AG04450 (cell line): ENCODE measurements at regions of chr3 and their contacts with region 1.

Region 1: DNA sequence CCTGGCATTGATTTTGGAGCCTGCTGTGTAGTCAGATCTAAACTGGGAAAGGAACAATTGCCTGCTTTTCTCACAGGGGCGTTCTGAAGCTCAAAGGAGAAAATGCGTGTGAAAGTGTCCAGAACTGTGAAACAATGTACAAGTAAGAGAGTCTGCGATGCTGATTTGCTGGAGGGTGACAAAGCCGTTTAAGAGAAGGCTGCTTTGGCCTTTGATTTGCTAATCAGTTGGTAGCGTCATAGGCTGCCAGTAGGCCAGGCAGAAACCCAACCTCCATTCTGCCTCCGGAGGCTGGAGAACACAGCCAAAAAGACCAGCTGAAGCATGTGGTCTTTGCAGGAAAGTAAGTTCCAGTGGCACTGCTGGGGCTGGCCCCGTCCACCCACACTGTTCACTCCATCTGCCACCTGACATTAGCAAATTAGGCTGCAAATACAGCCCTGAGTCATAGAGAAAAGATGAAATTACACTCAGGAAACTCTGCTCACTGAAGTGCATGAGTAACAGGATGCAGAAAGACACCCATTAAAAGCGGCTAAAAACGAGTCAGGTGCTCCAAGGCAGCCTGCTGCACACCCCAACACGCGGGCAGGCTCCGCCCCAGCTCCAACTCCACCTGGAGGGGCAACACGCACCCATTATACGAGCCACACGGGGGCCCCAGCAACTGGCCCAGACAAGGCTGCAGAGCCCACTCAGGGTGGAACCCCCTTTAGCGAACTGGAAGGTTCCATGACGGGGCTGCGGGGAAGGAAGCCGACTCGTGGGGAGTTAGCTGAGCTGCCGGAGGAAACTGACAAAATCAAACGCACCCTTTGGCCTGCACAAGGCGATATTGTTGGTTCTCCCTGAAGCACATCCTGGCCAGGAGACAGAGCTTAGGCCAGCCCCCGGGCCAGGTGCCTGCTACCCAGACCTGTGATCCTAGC is 31.6 kb downstream of the ZDHHC19 start:
- DNase-seq: peak; percentile 36
- H3K4me3 ChIP-seq: no peak overlapping the region
- H3K27ac ChIP-seq: peak overlapping the region; percentile 57
- H3K27me3 ChIP-seq: peaks cover 2% of the 10 kb centered on the region
- CTCF ChIP-seq: no peak

Region 2: DNA sequence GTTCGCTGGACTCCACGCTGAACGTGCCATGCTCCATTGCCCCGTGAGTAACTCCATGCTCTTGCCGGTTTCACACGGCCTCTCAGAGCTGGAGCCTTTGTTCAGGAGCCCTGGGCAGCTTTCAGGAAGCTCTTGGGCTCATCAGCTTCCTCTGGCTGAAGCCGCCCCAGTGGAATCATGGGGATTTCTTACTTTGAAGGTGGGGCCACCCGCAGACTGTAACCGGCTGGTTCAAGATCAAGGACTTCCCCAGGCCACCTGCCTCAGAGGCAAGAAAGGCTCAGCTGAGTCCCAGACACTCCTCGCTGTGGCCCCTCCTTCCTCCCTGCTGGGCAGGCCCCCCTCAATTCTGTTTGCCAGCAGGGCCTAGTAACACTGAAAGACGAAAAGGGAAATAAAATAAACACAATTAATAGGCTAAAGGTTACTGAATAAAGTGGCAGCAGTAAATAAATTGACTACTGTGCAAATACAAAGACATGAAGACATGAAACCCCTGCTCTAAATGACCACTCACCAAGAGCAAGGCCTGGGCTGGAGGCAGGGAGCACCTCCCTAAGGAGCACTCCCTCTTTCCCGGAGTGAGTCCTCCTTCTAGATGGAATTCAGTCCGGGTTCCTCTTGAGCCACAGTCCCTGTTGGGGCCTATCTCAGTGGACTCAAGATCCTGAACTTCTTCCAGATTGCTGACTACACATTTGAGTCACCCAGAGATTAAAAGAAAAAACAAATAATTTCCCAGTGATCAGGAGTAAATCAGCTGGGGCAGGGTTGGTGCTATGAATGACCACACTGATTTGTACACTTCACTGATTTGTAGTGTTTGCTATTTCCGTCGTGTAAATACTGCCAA is 19.5 kb before region 1 on chr3:
- CTCF ChIA-PET with region 1: no interaction called
- POLR2A ChIA-PET with region 1: interaction called, 12 read pairs
- DNase-seq: no peak
- H3K4me3 ChIP-seq: no peak overlapping the region
- H3K27ac ChIP-seq: no peak overlapping the region
- H3K27me3 ChIP-seq: no peaks in the 10 kb centered on the region
- CTCF ChIP-seq: no peak